Aorta (tissue), 5 donors: ENCODE measurements at regions of chr6 and their contacts with region 1.

Region 1: DNA sequence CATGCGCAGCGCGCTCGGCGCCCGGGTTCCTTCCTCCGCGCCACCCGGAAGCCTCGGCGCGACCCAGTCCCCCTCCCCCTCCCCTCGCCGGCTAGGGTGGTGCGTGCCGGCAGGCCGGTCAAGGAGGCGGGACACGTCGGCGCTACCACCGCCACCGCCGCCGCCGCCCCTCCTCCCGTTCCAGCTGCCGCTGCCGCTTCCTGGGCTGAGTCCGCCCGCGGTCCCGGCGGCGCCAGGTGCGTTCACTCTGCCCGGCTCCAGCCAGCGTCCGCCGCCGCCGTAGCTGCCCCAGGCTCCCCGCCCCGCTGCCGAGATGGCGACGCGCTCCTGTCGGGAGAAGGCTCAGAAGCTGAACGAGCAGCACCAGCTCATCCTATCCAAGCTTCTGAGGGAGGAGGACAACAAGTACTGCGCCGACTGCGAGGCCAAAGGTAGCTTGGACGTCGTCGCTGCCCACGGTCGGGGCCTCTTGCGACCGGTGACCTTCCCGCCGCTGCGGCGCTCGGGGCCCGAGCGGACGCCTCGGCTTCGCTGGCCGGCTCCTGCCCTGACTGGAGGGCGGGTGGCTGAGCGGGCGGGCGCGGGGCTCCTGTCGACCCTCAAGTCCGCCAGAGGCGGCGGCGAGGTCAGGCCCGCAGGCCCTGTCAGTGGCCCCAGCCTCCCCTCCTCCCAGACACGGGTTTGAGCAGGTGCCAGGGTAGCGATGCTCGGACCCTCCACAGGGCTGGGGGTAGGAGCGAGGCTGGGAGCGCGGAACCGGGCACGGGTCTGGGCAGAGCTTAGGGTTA is at the start of gene SMAP1:
- DNase-seq: peak; percentile 97 to 98
- ATAC-seq: peak; percentile 99
- H3K4me3 ChIP-seq: peak within 1 kb of the TSS; percentile 49 to 98
- H3K27ac ChIP-seq: peak within 1 kb of the TSS; percentile 43 to 76
- H3K4me1 ChIP-seq: peaks cover under 1 to 3% of the 10 kb centered on the region in 2 donors
- H3K27me3 ChIP-seq: no peaks in the 10 kb centered on the region
- total RNA-seq, gene SMAP1: 24.5 to 24.7 TPM

Region 2: GRCh38 chr6:70413114-70413991 is 254.6 kb before region 1 on chr6 and contains the start of gene FAM135A:
- intact Hi-C with region 1: loop called in 1 of 2 experiments (anchors 10 kb)
- DNase-seq: peak; percentile 98
- ATAC-seq: peak; percentile 99
- H3K4me3 ChIP-seq: peak within 1 kb of the TSS; percentile 88
- H3K27ac ChIP-seq: peak within 1 kb of the TSS in 1 of 2 donors; percentile 65
- H3K4me1 ChIP-seq: peaks cover 0 to 3% of the 10 kb centered on the region in 2 donors
- H3K27me3 ChIP-seq: no peaks in the 10 kb centered on the region
- total RNA-seq, gene FAM135A: 21.6 to 25.7 TPM